ENCODE measurements at regions of chr5 and their contacts with region 1.

Region 1: GRCh38 chr5:149636851-149637246 is 55.6 kb downstream of the ARHGEF37 start:
- DNase-seq: peak in 5 of 7 donors; percentile 45 to 89 (median 82)
- H3K4me3 ChIP-seq: no peak overlapping the region
- H3K27ac ChIP-seq: no peak overlapping the region
- H3K4me1 ChIP-seq: peaks cover 7 to 8% of the 10 kb centered on the region in 2 donors
- H3K27me3 ChIP-seq: no peaks in the 10 kb centered on the region
- CTCF ChIP-seq: peak; percentile 53 to 96 (median 86)
- POLR2A ChIP-seq: no peak

Region 2: DNA sequence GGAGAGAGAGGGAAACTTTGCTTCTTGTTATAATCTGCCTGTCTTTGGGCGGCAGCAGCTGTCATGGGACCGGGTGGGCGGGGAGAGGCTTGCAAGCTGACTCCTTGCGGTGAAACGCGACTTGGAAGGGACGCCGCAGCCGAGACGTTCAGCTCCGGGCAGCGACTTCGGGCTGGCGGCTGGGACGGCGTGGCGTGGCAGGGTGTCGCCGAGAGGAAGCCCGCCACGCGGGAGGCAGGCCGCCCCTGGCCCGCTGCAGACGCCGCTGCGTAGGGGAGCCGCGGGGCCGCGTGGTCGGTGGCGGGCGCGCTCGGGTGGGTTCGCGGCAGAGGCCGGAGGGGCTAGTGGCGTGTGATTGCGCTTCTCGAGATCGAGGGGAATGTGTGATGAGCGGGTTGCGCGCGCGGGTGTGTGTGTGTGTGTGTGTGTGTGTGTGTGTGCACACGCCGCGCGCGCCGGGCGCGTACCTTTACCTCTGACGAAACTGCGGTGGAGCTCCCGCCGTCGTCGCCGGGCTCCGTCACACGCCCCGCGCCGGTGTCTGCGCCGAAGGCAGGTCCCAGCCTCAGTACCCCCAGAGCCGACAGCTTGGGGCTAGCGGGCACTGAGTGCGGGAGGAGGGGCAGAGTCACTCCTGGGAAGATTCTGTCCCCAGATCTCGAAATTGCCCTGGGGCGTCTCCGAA is 94.9 kb after region 1 on chr5:
- intact Hi-C with region 1: loop called in 1 of 2 experiments (anchors 10 kb)
- DNase-seq: peak; percentile 83 to 93 (median 89)
- H3K4me3 ChIP-seq: peak overlapping the region; percentile 10 to 98 (median 68)
- H3K27ac ChIP-seq: peak overlapping the region in 4 of 5 donors; percentile 38 to 84 (median 76)
- H3K4me1 ChIP-seq: peaks cover 0 to 8% of the 10 kb centered on the region in 2 donors
- H3K27me3 ChIP-seq: no peaks in the 10 kb centered on the region
- CTCF ChIP-seq: peak in 1 of 6 experiments; percentile 8
- POLR2A ChIP-seq: peak; percentile 22 to 70

Region 3: GRCh38 chr5:149828161-149828884 is 191.5 kb after region 1 on chr5:
- intact Hi-C with region 1: loop called (anchors 2 to 5 kb)
- DNase-seq: peak; percentile 82 to 97 (median 92)
- H3K4me3 ChIP-seq: no peak overlapping the region
- H3K27ac ChIP-seq: no peak overlapping the region
- H3K4me1 ChIP-seq: no peaks in the 10 kb centered on the region
- H3K27me3 ChIP-seq: no peaks in the 10 kb centered on the region
- CTCF ChIP-seq: peak; percentile 88 to 95 (median 94)
- POLR2A ChIP-seq: no peak

Region 4: GRCh38 chr5:149834246-149834855 is 197.5 kb after region 1 on chr5:
- intact Hi-C with region 1: loop called (anchors 2 to 5 kb)
- DNase-seq: peak; percentile 72 to 91 (median 78)
- H3K4me3 ChIP-seq: no peak overlapping the region
- H3K27ac ChIP-seq: no peak overlapping the region
- H3K4me1 ChIP-seq: peaks cover 4 to 8% of the 10 kb centered on the region in 2 donors
- H3K27me3 ChIP-seq: no peaks in the 10 kb centered on the region
- CTCF ChIP-seq: peak; percentile 53 to 79 (median 76)
- POLR2A ChIP-seq: no peak

Region 5: GRCh38 chr5:149990518-149991376 is 353.9 kb after region 1 on chr5:
- intact Hi-C with region 1: loop called (anchors 5 to 10 kb)
- DNase-seq: peak; percentile 67 to 93 (median 83)
- H3K4me3 ChIP-seq: no peak overlapping the region
- H3K27ac ChIP-seq: no peak overlapping the region
- H3K4me1 ChIP-seq: no peaks in the 10 kb centered on the region
- H3K27me3 ChIP-seq: no peaks in the 10 kb centered on the region
- CTCF ChIP-seq: peak; percentile 94 to 98 (median 96)
- POLR2A ChIP-seq: no peak